Endothelial cell of umbilical vein (primary cell): ENCODE measurements at regions of chr12 and their contacts with region 1.

Region 1: DNA sequence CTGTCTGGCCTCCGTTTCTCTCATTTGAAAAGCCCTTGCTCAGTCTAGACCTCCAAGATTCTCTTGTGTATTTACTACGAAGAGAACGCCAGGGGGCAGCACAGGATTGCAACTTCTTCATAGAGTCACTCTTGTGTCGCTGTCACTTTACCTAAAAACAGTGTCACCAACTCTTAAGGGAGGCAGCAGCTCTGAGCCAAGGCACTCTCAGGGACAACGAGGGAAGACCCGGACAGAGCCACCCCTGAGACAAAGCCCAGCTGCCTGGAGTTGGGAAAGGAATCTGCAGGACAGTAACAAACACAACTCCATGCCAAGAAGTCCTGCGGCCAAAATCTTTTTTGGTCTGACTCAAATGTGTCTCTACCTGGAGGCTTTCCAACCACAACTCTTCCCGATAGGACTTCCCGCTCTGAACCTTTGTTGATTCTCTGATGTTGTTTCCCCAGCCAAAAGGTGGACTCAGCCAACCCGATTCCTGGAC is 9.6 kb upstream of the RPAP3 start:
- DNase-seq: peak; percentile 70
- H3K4me3 ChIP-seq: no peak overlapping the region
- H3K27ac ChIP-seq: no peak overlapping the region
- H3K4me1 ChIP-seq: peaks cover 7% of the 10 kb centered on the region
- H3K27me3 ChIP-seq: no peaks in the 10 kb centered on the region
- CTCF ChIP-seq: peak; percentile 63 to 78
- POLR2A ChIP-seq: no peak

Region 2: DNA sequence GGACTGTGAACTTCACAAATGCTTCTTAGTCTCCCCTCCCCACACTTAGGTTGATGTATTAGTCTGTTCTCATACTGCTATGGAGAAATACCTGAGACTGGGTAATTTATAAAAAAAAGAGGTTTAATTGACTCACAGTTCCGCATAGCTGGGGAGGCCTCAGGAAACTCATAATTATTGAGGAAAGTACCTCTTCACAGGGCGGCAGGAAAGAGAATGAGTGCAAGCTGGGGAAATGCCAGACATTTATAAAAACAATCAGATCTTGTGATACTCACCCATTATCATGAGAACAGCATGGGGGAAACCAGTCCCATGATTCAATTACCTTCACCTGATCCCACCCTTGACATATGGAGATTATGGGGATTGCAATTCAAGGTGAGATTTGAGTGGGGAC is 1068.4 kb before region 1 on chr12:
- CTCF ChIA-PET with region 1: no interaction called
- POLR2A ChIA-PET with region 1: no interaction called
- dilution Hi-C with region 1: no loop called
- intact Hi-C with region 1: no loop called
- DNase-seq: peak; percentile 76
- H3K4me3 ChIP-seq: no peak overlapping the region
- H3K27ac ChIP-seq: peak overlapping the region; percentile 57
- H3K4me1 ChIP-seq: peaks cover 7% of the 10 kb centered on the region
- H3K27me3 ChIP-seq: no peaks in the 10 kb centered on the region
- CTCF ChIP-seq: no peak
- POLR2A ChIP-seq: no peak

Region 3: DNA sequence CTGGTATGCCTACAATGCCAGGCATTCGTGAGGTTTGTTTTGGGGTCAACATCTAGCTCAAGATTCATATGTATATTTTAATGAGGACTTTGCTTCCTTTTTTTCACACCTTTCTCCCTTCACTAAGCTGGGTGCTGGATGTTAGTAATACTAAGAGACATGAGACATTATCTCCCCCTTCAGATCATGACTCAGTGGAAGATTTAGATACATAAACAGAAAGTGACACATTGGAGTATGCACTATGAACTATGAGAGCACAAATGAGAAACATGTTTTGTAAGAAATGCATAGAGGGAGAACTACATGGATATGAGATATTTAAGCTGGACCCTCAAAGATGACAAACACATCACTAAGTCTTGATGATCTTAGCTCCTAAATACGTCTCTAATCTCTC is 295.9 kb before region 1 on chr12:
- CTCF ChIA-PET with region 1: no interaction called
- POLR2A ChIA-PET with region 1: no interaction called
- dilution Hi-C with region 1: no loop called
- intact Hi-C with region 1: no loop called
- DNase-seq: no peak
- H3K4me3 ChIP-seq: no peak overlapping the region
- H3K27ac ChIP-seq: no peak overlapping the region
- H3K4me1 ChIP-seq: no peaks in the 10 kb centered on the region
- H3K27me3 ChIP-seq: peaks cover 4 to 11% of the 10 kb centered on the region in 2 experiments
- CTCF ChIP-seq: no peak
- POLR2A ChIP-seq: no peak

Region 4: DNA sequence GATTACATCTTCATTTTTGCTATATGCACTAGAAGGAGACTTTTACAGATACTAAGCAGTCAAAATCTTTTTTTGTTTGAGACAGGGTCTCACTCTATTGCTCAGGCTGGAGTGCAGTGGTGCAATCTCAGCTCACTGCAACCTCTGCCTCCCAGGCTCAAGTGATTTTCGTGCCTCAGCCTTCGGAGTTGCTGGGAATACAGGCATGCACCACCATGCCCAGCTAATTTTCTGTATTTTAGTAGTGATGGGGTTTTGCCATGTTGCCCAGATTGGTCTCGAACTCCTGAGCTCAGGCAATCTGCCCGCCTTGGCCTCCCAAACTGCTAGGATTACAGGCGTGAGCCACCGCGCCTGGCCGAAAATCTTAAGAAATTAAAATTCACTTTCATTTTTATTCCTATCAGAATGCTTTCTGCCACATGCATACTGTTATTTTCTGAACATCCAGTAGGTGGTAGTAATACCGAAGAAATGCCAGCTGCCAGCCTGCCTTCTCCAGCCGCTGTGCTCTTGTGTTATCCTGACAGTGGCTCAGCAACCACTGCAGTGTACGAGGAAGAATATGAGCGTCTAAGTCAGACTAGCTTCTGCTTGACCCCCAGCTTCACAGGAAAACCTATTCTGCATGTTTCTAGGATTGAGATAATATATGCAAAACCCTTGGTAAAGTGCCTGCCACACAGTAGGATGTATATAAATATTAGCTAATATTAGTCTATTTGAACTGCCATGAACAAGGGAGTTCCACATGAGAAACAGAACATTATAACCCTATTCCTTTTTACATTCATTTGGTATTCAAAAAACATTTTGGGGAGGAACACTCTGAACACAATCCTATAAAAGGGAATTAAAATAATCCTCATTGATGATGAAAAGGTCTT is 63.8 kb before region 1 on chr12:
- CTCF ChIA-PET with region 1: no interaction called
- POLR2A ChIA-PET with region 1: no interaction called
- dilution Hi-C with region 1: no loop called
- intact Hi-C with region 1: no loop called
- DNase-seq: peak; percentile 66
- H3K4me3 ChIP-seq: no peak overlapping the region
- H3K27ac ChIP-seq: no peak overlapping the region
- H3K4me1 ChIP-seq: no peaks in the 10 kb centered on the region
- H3K27me3 ChIP-seq: no peaks in the 10 kb centered on the region
- CTCF ChIP-seq: peak; percentile 39 to 50
- POLR2A ChIP-seq: no peak

Region 5: GRCh38 chr12:47698055-47698454 is 17.4 kb before region 1 on chr12:
- CTCF ChIA-PET with region 1: no interaction called
- POLR2A ChIA-PET with region 1: no interaction called
- dilution Hi-C with region 1: no loop called
- intact Hi-C with region 1: no loop called
- DNase-seq: no peak
- H3K4me3 ChIP-seq: no peak overlapping the region
- H3K27ac ChIP-seq: no peak overlapping the region
- H3K4me1 ChIP-seq: no peaks in the 10 kb centered on the region
- H3K27me3 ChIP-seq: no peaks in the 10 kb centered on the region
- CTCF ChIP-seq: no peak
- POLR2A ChIP-seq: no peak

Region 6: DNA sequence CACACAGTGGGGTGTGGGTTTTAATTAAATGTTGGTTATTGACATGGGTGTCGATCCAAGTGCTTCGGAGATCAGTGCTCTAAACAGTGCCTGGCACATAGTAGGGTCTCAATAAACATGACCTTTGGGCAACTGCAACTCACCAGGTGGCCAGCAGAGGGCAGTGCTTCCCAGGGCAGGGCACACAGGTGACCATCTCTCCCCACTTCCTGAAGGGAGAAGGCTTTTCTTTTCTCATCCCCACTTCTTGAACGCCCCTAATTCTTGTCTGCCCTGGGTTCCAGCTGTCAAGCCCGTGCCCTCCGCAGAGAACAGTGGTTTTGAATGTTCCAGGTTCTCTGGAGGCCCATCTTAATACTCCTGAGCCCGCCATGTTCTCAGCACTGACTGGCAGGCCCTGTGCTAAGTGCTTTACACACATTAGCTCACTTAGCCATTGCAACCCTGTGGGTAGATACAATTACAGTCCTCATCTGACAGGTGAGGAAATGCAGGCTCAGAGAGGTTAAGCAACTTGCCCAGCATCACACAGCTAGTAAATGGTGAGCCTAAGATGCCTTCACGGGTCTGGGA is 26.9 kb after region 1 on chr12:
- CTCF ChIA-PET with region 1: interaction called, 44 read pairs
- POLR2A ChIA-PET with region 1: no interaction called
- dilution Hi-C with region 1: no loop called
- intact Hi-C with region 1: loop called (anchors 1 kb)
- DNase-seq: peak; percentile 51
- H3K4me3 ChIP-seq: no peak overlapping the region
- H3K27ac ChIP-seq: no peak overlapping the region
- H3K4me1 ChIP-seq: peaks cover 11% of the 10 kb centered on the region
- H3K27me3 ChIP-seq: no peaks in the 10 kb centered on the region
- CTCF ChIP-seq: peak; percentile 89 to 94
- POLR2A ChIP-seq: no peak

Region 7: GRCh38 chr12:47767216-47767724 is 51.8 kb after region 1 on chr12:
- CTCF ChIA-PET with region 1: interaction called, 162 read pairs
- POLR2A ChIA-PET with region 1: no interaction called
- dilution Hi-C with region 1: no loop called
- intact Hi-C with region 1: loop called (anchors 1 kb)
- DNase-seq: peak; percentile 66
- H3K4me3 ChIP-seq: no peak overlapping the region
- H3K27ac ChIP-seq: no peak overlapping the region
- H3K4me1 ChIP-seq: peaks cover 6% of the 10 kb centered on the region
- H3K27me3 ChIP-seq: no peaks in the 10 kb centered on the region
- CTCF ChIP-seq: peak; percentile 64 to 66
- POLR2A ChIP-seq: no peak

Region 8: GRCh38 chr12:47949441-47950308 is 234.2 kb after region 1 on chr12:
- CTCF ChIA-PET with region 1: interaction called, 8 read pairs
- POLR2A ChIA-PET with region 1: no interaction called
- dilution Hi-C with region 1: no loop called
- intact Hi-C with region 1: loop called (anchors 1 kb)
- DNase-seq: peak; percentile 66
- H3K4me3 ChIP-seq: no peak overlapping the region
- H3K27ac ChIP-seq: no peak overlapping the region
- H3K4me1 ChIP-seq: no peaks in the 10 kb centered on the region
- H3K27me3 ChIP-seq: peaks cover 0 to 14% of the 10 kb centered on the region in 2 experiments
- CTCF ChIP-seq: peak; percentile 94 to 98
- POLR2A ChIP-seq: no peak

Region 9: GRCh38 chr12:48157018-48157888 is 441.8 kb after region 1 on chr12 and contains the start of gene ASB8:
- CTCF ChIA-PET with region 1: no interaction called
- POLR2A ChIA-PET with region 1: no interaction called
- dilution Hi-C with region 1: no loop called
- intact Hi-C with region 1: loop called (anchors 10 kb)
- DNase-seq: peak; percentile 99
- H3K4me3 ChIP-seq: peak within 1 kb of the TSS; percentile 35 to 66 (median 54)
- H3K27ac ChIP-seq: peak within 1 kb of the TSS; percentile 0
- H3K4me1 ChIP-seq: peaks cover 3% of the 10 kb centered on the region
- H3K27me3 ChIP-seq: peaks cover 4 to 7% of the 10 kb centered on the region in 2 experiments
- CTCF ChIP-seq: peak; percentile 44 to 54
- POLR2A ChIP-seq: peak; percentile 84
- total RNA-seq, gene ASB8: 26.5 and 29.7 TPM in 2 replicates